ENCODE measurements at regions of chr12 and their contacts with region 1.

Region 1: DNA sequence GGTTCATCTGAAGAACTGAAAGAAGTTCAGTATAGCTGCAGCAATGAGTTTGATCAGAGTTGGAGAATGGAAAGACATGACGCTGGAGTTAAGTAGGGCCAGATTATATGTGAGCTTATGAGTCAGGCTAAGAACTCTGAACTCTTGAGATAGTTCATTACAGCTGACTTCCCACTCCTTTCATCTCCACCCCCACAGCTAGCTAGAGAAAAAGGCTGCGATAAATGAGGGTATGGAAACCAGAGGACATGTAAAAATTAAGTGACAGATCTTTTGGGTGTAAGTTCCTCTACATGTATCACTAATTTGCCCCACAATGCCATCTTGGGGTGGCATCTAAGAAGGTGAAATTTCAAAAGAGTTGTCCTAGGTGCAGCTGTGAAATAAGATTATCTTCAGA is 28.6 kb downstream of the PYM1 start:
- DNase-seq: no peak
- ATAC-seq: no peak
- H3K4me3 ChIP-seq: no peak overlapping the region
- H3K27ac ChIP-seq: no peak overlapping the region
- H3K4me1 ChIP-seq: no peaks in the 10 kb centered on the region
- H3K27me3 ChIP-seq: no peaks in the 10 kb centered on the region
- CTCF ChIP-seq: no peak

Region 2: DNA sequence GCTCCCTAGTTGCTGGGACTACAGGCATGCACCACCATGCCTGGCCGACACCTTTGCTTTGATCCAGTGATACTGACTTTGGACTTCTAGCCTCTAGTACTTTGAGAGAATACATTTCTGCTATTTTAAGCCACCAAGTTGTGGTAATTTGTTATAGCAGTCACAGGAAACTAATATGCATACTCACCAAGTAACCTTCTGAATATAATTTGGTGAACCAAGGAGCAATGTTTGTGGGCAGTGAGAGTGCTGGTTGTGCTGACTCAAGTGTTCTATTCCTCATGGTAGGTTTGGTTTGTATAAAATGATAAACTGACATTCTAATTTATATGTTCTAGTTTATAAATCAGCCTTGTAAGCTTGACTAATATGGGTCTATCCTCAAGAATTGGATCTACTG is 14.0 kb before region 1 on chr12:
- CTCF ChIA-PET with region 1: no interaction called
- POLR2A ChIA-PET with region 1: interaction called, 14 read pairs
- in situ Hi-C with region 1: no loop called
- intact Hi-C with region 1: no loop called
- DNase-seq: no peak
- ATAC-seq: no peak
- H3K4me3 ChIP-seq: no peak overlapping the region
- H3K27ac ChIP-seq: no peak overlapping the region
- H3K4me1 ChIP-seq: no peaks in the 10 kb centered on the region
- H3K27me3 ChIP-seq: no peaks in the 10 kb centered on the region
- CTCF ChIP-seq: no peak

Measured in Panc1 (cell line).